Activated CD4-positive, alpha-beta T cell treated with anti-CD3 and anti-CD28 coated beads, Interleukin-2, amount 10 ng/mL, durations not matched to agents 7 days and 5 days (primary cell): ENCODE measurements at regions of chr5 and their contacts with region 1.

Region 1: GRCh38 chr5:39209924-39210323 is 9.4 kb downstream of the FYB1 start:
- DNase-seq: peak; percentile 90
- H3K4me3 Mint-ChIP-seq: peak overlapping the region; percentile 74
- H3K27ac Mint-ChIP-seq: peak overlapping the region; percentile 93
- H3K4me1 Mint-ChIP-seq: peaks cover 96% of the 10 kb centered on the region
- H3K27me3 Mint-ChIP-seq: no peaks in the 10 kb centered on the region

Region 2: DNA sequence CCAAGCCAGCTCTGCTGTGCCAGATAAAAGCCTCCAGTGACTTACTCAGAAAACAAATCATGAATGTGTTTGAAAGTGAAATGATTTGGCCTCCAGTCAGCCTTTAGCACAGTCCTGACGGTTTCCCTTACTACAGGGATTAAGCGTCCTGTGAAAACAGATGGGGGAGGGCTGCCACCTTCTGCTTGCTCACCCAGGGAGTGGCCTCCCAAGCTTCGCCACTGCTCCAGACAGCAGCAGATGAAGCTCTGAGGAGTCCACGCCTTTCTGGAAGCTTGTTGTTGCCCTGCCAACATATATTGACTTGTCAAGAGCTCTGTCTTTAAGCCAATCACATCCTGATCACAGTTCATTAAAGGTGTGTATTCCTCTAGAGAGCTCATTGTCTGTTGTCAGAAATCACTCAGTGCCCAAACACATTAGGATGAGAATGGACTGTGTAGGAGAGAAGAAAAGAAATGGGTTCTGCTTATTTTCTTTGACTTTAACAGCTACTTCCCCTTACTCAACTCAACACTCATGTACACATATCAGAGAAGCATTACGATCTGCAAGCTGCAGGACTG is 14.4 kb after region 1 on chr5:
- CTCF ChIA-PET with region 1: interaction called, 15 read pairs
- POLR2A ChIA-PET with region 1: no interaction called
- DNase-seq: no peak
- H3K4me3 Mint-ChIP-seq: no peak overlapping the region
- H3K27ac Mint-ChIP-seq: no peak overlapping the region
- H3K4me1 Mint-ChIP-seq: peaks cover 28% of the 10 kb centered on the region
- H3K27me3 Mint-ChIP-seq: no peaks in the 10 kb centered on the region

Region 3: GRCh38 chr5:39231705-39232525 is 22.0 kb after region 1 on chr5:
- CTCF ChIA-PET with region 1: interaction called, 18 read pairs
- POLR2A ChIA-PET with region 1: no interaction called
- DNase-seq: no peak
- H3K4me3 Mint-ChIP-seq: no peak overlapping the region
- H3K27ac Mint-ChIP-seq: peak overlapping the region; percentile 64
- H3K4me1 Mint-ChIP-seq: peaks cover 17% of the 10 kb centered on the region
- H3K27me3 Mint-ChIP-seq: no peaks in the 10 kb centered on the region

Region 4: GRCh38 chr5:39501397-39501796 is 291.5 kb after region 1 on chr5:
- CTCF ChIA-PET with region 1: no interaction called
- POLR2A ChIA-PET with region 1: no interaction called
- DNase-seq: no peak
- H3K4me3 Mint-ChIP-seq: no peak overlapping the region
- H3K27ac Mint-ChIP-seq: no peak overlapping the region
- H3K4me1 Mint-ChIP-seq: no peaks in the 10 kb centered on the region
- H3K27me3 Mint-ChIP-seq: peaks cover 11% of the 10 kb centered on the region